Activated CD8-positive, alpha-beta memory T cell treated with anti-CD3 and anti-CD28 coated beads, Interleukin-2, amount 10 ng/mL, durations not matched to agents 7 days and 5 days (primary cell): ENCODE measurements at regions of chr5 and their contacts with region 1.

Region 1: DNA sequence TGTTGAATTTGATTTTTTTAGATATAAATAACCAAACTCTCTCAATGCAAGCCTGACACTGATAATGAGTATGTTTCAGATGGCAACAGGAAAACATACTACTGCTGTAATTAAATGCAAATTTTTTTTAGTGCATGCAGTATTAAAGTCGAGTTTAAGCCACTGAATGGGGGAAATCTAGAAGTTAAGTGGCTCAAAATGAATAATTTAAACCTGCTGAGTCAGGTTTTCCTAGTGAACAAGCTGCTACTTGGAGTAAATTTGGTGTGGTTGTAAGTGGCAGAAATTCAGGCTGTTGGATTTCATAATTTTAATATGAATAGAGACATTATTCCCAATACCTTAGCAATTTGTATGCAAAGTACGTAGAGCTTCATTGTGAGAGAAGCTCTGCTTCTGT is 121.8 kb downstream of the SLF1 start:
- DNase-seq: no peak
- ATAC-seq: no peak
- H3K4me3 Mint-ChIP-seq: no peak overlapping the region
- H3K27ac Mint-ChIP-seq: no peak overlapping the region
- H3K4me1 Mint-ChIP-seq: no peaks in the 10 kb centered on the region
- H3K27me3 Mint-ChIP-seq: peaks cover 8% of the 10 kb centered on the region

Region 2: DNA sequence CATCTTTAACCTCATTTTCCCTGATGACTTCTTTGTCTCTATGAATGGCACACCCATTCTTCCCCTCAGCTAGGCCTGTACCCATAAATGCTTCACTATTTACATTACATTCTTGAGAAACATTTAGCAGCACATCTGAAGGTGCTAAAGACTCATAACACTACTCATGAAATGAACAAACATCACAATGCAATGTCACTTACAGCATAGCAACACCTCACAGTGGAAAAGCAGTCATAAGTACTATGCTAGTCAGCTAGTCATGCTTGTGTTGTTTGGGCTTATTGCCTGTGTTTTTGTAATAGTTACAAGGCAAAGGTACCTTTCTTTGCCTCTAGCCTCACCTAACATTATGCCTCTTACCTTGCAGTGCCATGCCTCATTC is 350.8 kb before region 1 on chr5:
- CTCF ChIA-PET with region 1: no interaction called
- DNase-seq: no peak
- ATAC-seq: peak; percentile 85
- H3K4me3 Mint-ChIP-seq: no peak overlapping the region
- H3K27ac Mint-ChIP-seq: peak overlapping the region; percentile 72
- H3K4me1 Mint-ChIP-seq: peaks cover 15% of the 10 kb centered on the region
- H3K27me3 Mint-ChIP-seq: no peaks in the 10 kb centered on the region

Region 3: GRCh38 chr5:94524841-94525697 is 215.2 kb before region 1 on chr5:
- CTCF ChIA-PET with region 1: interaction called, 41 read pairs
- DNase-seq: peak; percentile 44
- ATAC-seq: peak; percentile 80
- H3K4me3 Mint-ChIP-seq: no peak overlapping the region
- H3K27ac Mint-ChIP-seq: no peak overlapping the region
- H3K4me1 Mint-ChIP-seq: peaks cover 6% of the 10 kb centered on the region
- H3K27me3 Mint-ChIP-seq: no peaks in the 10 kb centered on the region

Region 4: GRCh38 chr5:94849821-94850736 is 109.8 kb after region 1 on chr5:
- CTCF ChIA-PET with region 1: interaction called, 17 read pairs
- DNase-seq: peak; percentile 48
- ATAC-seq: peak; percentile 88
- H3K4me3 Mint-ChIP-seq: no peak overlapping the region
- H3K27ac Mint-ChIP-seq: no peak overlapping the region
- H3K4me1 Mint-ChIP-seq: peaks cover 8% of the 10 kb centered on the region
- H3K27me3 Mint-ChIP-seq: no peaks in the 10 kb centered on the region